H1 (cell line): ENCODE measurements at regions of chr19 and their contacts with region 1.

Region 1: DNA sequence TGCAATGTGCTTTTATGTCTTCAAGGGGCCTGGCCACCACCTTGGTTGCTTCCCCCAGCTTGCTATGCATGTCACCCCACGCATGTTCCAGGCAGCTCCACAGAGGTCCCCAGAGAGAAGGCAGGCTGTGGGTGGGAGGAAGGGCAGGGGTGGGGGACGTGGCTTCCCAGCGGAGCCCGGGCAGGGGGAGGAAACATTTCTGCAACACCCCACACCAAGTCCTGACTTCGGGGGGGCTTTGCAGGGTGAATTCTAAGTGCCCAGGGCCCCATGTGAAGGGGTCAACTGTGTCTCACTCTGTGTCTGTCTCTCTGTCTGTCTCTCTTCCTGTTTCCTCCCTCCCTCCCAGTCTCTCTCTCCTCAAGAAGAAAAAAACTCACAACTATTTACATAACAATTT is 39.6 kb downstream of the LTBP4 start:
- DNase-seq: no peak
- H3K4me3 ChIP-seq: no peak overlapping the region
- H3K27ac ChIP-seq: no peak overlapping the region
- H3K4me1 ChIP-seq: peaks cover 0 to 3% (median 0%) of the 10 kb centered on the region in 4 experiments; a peak in 1 of 7 replicates
- H3K27me3 ChIP-seq: no peaks in the 10 kb centered on the region; a peak in 4 of 7 replicates
- CTCF ChIP-seq: no peak
- EP300 ChIP-seq: no peak
- POLR2A ChIP-seq: no peak
- RAD21 ChIP-seq: no peak

Region 2: DNA sequence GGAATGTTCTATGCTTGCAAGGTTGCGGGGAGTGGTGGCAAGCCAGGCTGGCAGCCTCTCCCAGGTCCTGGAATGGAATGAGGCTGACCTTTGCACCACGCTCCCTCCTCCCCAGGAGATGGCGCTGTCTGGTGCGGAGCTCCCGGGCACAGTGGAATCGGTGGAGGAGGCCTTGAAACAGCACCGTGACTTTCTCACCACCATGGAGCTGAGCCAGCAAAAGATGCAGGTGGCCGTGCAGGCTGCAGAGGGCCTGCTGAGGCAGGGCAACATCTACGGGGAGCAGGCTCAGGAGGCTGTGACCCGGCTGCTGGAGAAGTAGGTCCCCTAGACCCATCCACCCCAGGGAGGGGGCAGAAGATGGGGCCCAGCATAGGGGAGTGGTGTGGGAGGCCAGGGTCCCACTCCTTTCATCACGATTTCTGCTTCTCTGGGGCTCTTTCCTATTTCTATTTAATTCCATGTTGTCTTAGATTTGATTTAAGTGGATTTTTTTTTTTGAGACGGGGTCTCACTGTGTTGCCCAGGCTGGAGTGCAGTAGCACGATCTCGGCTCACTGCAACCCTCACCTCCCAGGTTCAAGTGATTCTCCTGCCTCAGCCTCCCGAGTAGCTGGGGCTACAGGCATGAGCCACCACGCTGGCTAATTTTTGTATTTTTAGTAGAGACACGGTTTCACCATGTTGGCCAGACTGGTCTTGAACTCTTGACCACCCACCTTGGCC is 117.3 kb before region 1 on chr19:
- CTCF ChIA-PET with region 1: interaction called, 13 read pairs
- POLR2A ChIA-PET with region 1: no interaction called
- DNase-seq: peak in 1 of 2 experiments; percentile 87
- H3K4me3 ChIP-seq: no peak overlapping the region
- H3K27ac ChIP-seq: no peak overlapping the region
- H3K4me1 ChIP-seq: peaks cover 0 to 4% (median 1%) of the 10 kb centered on the region in 4 experiments; a peak in 3 of 7 replicates
- H3K27me3 ChIP-seq: peaks cover 17 to 32% (median 27%) of the 10 kb centered on the region in 4 experiments
- CTCF ChIP-seq: peak; percentile 91 to 99 (median 98)
- EP300 ChIP-seq: no peak
- POLR2A ChIP-seq: no peak
- RAD21 ChIP-seq: peak; percentile 67 to 78

Region 3: DNA sequence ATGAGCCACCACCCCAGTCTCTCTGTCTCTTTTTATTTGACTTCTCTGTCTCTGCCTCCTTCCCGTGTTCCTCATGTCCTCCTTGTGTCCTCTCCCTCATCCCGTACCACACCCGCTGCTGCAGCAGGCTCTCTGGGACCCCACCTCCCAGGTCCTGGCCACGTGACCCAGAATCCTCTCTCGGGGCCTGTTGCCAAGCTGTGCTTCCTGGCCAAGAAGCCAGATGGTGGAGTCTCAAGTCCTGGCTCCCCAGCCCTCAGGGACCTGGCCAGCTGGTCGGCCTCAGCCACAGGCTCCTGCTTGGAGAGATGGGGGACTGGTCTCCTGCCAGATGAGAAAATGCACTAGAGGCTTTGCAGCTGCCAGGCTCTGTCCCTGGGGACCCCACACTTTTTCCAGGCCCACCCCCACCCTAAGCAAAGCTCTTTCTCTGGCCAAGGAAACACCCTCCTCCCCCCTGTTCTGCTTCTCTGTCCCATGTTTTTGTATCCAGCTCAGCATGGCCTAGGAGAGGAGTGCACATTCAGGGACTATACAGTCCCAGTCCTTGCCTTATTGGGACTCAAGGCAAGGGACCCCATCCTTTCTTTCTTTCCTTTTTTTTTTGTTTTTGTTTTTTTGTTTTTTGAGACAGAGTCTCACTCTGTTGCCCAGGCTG is 98.4 kb before region 1 on chr19:
- CTCF ChIA-PET with region 1: interaction called, 20 read pairs
- POLR2A ChIA-PET with region 1: no interaction called
- DNase-seq: no peak
- H3K4me3 ChIP-seq: no peak overlapping the region
- H3K27ac ChIP-seq: no peak overlapping the region
- H3K4me1 ChIP-seq: no peaks in the 10 kb centered on the region
- H3K27me3 ChIP-seq: no peaks in the 10 kb centered on the region
- CTCF ChIP-seq: no peak
- EP300 ChIP-seq: no peak
- POLR2A ChIP-seq: no peak
- RAD21 ChIP-seq: no peak

Region 4: DNA sequence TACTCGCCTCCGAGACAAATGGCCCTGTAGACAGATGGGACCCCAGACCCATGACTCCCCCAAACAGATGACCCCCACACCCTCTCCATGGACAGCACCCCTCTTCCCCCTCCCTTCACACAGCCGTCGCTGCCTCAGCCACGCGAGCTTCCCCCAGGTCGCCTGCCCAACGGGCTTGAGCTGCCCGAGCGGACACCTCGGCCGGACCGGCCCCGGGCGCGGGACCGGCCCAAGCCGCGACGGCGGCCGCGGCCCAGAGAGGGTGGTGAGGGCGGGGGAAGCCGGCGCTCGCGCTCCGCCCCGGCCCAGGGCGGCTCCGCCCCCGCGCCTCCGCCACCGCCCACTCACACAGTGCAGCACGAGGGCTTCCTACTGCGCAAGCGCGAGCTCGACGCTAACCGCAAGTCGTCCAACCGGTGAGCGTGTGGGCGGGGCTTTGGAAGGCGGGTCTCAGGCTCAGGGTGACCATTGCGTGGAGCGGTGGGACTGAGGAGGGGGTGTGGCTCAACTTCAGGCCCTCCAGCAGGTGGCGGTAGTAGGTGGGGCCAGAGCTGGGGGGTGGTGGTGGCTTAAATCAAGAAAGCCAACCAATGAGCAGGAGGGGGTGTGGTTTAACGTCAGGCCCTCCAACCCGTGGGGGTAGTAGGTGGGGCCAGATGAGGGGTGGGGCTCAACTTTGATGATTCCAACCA is 70.3 kb before region 1 on chr19:
- CTCF ChIA-PET with region 1: interaction called, 16 read pairs
- POLR2A ChIA-PET with region 1: no interaction called
- DNase-seq: peak; percentile 99 to 100
- H3K4me3 ChIP-seq: peak overlapping the region; percentile 42 to 74 (median 45)
- H3K27ac ChIP-seq: no peak overlapping the region
- H3K4me1 ChIP-seq: peaks cover 2 to 13% (median 4%) of the 10 kb centered on the region in 4 experiments
- H3K27me3 ChIP-seq: peaks cover 32 to 49% (median 46%) of the 10 kb centered on the region in 4 experiments
- CTCF ChIP-seq: peak; percentile 42 to 62 (median 58)
- EP300 ChIP-seq: no peak
- POLR2A ChIP-seq: no peak
- RAD21 ChIP-seq: peak; percentile 17 to 36; a peak in 2 of 4 replicates

Region 5: GRCh38 chr19:40609561-40610395 is 31.0 kb before region 1 on chr19:
- CTCF ChIA-PET with region 1: interaction called, 100 read pairs
- POLR2A ChIA-PET with region 1: interaction called, 3 read pairs
- DNase-seq: peak in 1 of 2 experiments; percentile 99
- H3K4me3 ChIP-seq: peak overlapping the region; percentile 44 to 67 (median 56)
- H3K27ac ChIP-seq: no peak overlapping the region
- H3K4me1 ChIP-seq: peaks cover 3 to 22% (median 17%) of the 10 kb centered on the region in 4 experiments
- H3K27me3 ChIP-seq: peaks cover 2 to 57% (median 54%) of the 10 kb centered on the region in 4 experiments
- CTCF ChIP-seq: no peak
- EP300 ChIP-seq: no peak
- POLR2A ChIP-seq: no peak
- RAD21 ChIP-seq: no peak

Region 6: DNA sequence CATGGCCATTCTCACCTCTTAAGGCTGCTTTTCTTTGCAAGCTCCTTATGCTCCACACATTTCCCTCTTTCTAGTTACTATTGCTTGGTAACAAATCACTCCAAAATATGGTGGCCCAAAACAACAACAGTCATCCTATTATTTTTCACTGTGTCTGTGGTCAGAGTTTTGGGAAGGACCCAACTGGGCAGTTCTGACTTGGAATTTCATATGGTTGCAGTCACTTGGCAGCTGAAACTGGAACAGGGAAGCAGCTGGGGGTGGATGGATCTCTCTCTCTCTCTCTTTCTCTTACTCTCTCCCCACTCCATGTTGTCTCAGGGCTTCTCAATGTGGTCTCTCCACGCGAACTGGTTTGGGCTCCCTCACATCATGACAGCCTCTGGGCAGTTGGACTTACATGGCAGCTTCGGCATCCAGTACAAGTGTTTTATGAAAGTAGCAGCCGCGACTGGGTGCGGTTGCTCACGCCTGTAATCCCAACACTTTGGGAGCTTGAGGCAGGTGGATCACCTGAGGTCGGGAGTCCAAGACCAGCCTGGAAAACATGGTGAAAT is 10.1 kb after region 1 on chr19:
- CTCF ChIA-PET with region 1: interaction called, 41 read pairs
- POLR2A ChIA-PET with region 1: no interaction called
- DNase-seq: no peak
- H3K4me3 ChIP-seq: no peak overlapping the region
- H3K27ac ChIP-seq: no peak overlapping the region
- H3K4me1 ChIP-seq: no peaks in the 10 kb centered on the region
- H3K27me3 ChIP-seq: no peaks in the 10 kb centered on the region
- CTCF ChIP-seq: no peak
- EP300 ChIP-seq: no peak
- POLR2A ChIP-seq: no peak
- RAD21 ChIP-seq: no peak